Activated CD4-positive, alpha-beta T cell treated with anti-CD3 and anti-CD28 coated beads, Interleukin-2, amount 10 ng/mL, durations not matched to agents 24 days and 14 days (primary cell): ENCODE measurements at regions of chr19 and their contacts with region 1.

Region 1: DNA sequence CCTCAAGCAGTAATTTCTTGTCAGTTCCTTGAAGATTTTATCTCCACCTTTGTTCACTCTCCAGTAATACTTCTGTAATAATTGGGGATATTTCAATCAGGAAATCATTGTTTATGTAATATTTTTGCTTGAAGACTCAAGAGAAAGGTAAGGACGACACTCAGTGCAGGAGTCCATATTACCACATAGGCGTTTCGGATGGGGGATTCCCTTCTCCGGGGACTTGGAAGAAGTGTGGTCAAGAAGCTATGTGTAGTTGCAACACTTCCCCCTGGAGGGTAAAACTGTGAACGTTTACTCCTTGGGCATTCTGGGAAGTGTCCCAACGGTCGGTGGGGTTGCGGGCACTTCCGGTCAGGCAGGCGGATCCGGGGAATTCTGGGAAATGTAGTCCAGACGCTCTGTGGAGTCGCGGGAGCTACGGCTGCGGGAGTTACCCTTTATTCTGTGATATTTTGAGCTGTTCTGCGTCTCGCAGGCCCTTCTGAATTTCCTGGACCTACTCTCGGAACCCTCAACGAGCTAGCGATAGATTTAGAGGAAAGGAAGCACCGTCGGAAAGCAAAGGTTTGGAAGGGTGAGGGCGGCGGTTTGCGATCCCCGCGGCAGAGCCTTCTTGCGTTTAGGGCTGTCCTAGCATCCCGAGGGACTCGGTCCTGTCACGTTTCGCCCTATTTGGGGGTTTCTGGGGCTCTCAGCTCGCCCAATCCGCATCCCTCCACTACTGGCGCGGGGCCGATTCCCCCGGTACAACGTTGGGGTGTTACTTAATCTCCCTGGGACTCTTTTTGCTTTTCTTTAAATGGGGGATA is at the start of gene ZNF221:
- DNase-seq: peak; percentile 87
- H3K4me3 Mint-ChIP-seq: peak within 1 kb of the TSS; percentile 96
- H3K27ac Mint-ChIP-seq: peak within 1 kb of the TSS; percentile 80
- H3K4me1 Mint-ChIP-seq: peaks cover 8% of the 10 kb centered on the region
- H3K27me3 Mint-ChIP-seq: peaks cover 3% of the 10 kb centered on the region
- total RNA-seq, gene ZNF221: 0.58 and 0.64 TPM in 2 replicates

Region 2: DNA sequence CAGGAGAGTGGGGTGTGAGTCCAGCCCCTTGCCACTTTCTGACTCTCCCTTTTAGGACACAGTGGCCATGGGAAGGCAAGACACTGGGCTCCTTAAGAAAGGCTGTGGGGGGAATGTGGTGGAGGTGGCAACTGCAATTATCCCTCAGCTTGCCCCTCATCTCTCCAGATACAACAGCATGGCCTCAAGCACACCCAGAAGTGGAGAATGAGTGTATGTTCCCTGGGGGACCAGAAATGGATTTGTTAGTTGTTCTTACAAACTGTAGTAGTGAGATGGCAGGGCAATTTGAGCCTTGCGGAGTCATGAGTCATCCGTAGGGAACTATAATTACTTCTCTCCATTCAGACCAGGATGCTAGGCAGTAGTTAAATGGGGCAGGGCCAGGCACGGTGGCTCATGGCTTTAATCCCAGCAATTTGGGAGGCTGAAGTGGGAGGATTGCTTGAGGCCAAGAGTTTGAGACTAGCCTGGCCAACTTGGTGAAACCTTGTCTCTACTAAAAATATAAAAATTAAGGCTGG is 1482.7 kb before region 1 on chr19:
- intact Hi-C with region 1: no loop called
- DNase-seq: no peak
- H3K4me3 Mint-ChIP-seq: no peak overlapping the region
- H3K27ac Mint-ChIP-seq: no peak overlapping the region
- H3K4me1 Mint-ChIP-seq: peaks cover 32% of the 10 kb centered on the region
- H3K27me3 Mint-ChIP-seq: peaks cover 4% of the 10 kb centered on the region

Region 3: DNA sequence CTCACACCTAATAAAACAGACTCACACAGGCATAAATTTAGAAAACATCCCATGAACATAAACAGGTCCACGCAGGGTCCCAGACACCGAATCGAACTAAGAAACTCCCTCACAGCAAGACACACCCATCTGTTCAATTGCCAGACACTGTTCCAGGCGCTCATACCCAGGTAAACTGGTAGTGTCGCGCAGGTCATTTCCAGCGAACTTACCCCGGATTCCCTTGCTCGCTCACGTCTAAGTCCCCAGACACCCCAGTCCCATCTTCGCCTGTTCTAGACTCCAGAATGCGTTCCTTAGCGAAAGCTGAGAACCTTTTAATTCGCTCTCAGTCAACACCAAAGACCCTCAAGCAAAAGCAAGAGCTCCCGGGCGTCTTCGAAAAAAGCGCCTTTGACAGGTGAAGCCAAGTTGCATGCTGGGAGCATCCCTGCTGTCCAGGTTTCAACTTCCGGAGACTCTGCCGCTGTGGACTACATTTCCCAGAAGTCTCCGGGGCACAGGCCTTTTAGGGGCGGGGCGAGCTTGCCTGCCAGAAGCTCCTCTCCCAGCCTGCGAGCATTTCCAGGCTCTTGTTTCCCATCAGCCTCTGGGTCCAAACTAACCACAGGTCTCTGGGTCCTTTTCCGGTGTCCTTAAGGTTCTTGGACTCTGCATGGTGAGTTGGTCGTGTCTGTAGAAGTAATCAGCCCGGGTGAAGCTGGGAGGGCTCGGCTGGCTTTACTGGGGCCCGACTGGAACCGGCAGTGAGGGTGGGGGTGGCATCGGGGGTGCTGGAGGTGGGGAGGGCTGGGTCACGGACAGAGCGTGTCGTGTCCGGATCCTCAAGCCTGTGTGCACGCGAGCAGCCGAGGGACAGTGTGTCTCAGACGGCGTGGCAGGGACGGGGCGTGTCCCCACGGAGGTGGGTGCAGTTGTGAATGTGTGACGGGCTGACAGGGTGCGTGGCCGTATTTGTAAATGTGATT is 124.0 kb before region 1 on chr19 and contains the start of gene ZNF283:
- intact Hi-C with region 1: loop called (anchors 1 kb)
- DNase-seq: peak; percentile 95
- H3K4me3 Mint-ChIP-seq: peak within 1 kb of the TSS; percentile 87
- H3K27ac Mint-ChIP-seq: peak within 1 kb of the TSS; percentile 42
- H3K4me1 Mint-ChIP-seq: peaks cover 13% of the 10 kb centered on the region
- H3K27me3 Mint-ChIP-seq: peaks cover 11% of the 10 kb centered on the region
- total RNA-seq, gene ZNF283: 4.0 and 5.7 TPM in 2 replicates

Region 4: GRCh38 chr19:43983912-43984686 is 33.1 kb after region 1 on chr19 and contains the start of gene ZNF155:
- intact Hi-C with region 1: loop called (anchors 1 kb)
- DNase-seq: peak; percentile 91
- H3K4me3 Mint-ChIP-seq: peak within 1 kb of the TSS; percentile 97
- H3K27ac Mint-ChIP-seq: peak within 1 kb of the TSS; percentile 93
- H3K4me1 Mint-ChIP-seq: peaks cover 8% of the 10 kb centered on the region
- H3K27me3 Mint-ChIP-seq: no peaks in the 10 kb centered on the region
- total RNA-seq, gene ZNF155: 4.6 and 6.6 TPM in 2 replicates